B cell (primary cell): ENCODE measurements at regions of chr1 and their contacts with region 1.

Region 1: GRCh38 chr1:25338188-25338981 is at the start of gene TMEM50A:
- DNase-seq: peak; percentile 95
- ATAC-seq: peak; percentile 77
- H3K4me3 ChIP-seq: peak within 1 kb of the TSS; percentile 83 to 89 (median 84)
- H3K4me3 Mint-ChIP-seq: peak within 1 kb of the TSS; percentile 96
- H3K27ac ChIP-seq: peak within 1 kb of the TSS; percentile 86 to 87
- H3K27ac Mint-ChIP-seq: peak within 1 kb of the TSS; percentile 98
- H3K4me1 ChIP-seq: peaks cover 14% of the 10 kb centered on the region in 2 donors
- H3K4me1 Mint-ChIP-seq: peaks cover 30% of the 10 kb centered on the region
- H3K27me3 ChIP-seq: no peaks in the 10 kb centered on the region
- H3K27me3 Mint-ChIP-seq: no peaks in the 10 kb centered on the region
- CTCF ChIP-seq: no peak
- total RNA-seq, gene TMEM50A: 59.4 and 62.6 TPM in 2 replicates

Region 2: DNA sequence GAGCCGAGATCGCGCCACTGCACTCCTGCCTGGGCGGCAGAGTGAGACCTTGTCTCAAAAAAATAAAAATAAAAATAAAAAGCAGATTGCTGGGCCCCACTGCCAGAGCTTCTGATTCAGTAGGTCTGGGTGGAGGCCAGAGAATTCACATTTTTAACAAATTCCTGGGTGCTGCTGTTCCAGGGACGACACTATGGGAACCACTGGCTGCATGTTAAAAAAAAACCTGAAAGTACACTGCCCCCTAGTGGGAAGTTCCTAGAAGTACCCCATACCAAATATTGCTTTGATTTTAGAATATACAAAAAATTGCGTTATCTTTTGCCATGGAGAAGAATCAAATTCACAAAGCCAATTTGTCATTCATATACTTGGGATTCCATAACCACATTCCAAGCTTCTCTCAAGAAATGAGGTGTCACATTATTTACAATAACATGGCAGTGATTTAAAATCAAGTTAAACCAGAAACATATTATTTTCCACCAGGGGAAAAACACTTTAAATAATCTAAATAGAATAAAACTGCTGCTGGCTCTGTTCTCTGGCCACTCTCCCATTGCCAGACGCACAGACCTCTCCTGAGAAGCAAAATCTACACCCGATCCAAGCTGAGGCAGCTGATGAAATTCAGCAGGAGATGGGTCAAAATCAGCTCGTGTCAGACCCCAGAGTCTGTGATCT is 133.4 kb before region 1 on chr1:
- CTCF ChIA-PET with region 1: no interaction called
- POLR2A ChIA-PET with region 1: no interaction called
- intact Hi-C with region 1: no loop called
- DNase-seq: peak; percentile 63
- ATAC-seq: peak; percentile 49
- H3K4me3 ChIP-seq: no peak overlapping the region
- H3K4me3 Mint-ChIP-seq: no peak overlapping the region
- H3K27ac ChIP-seq: no peak overlapping the region
- H3K27ac Mint-ChIP-seq: no peak overlapping the region
- H3K4me1 ChIP-seq: no peaks in the 10 kb centered on the region
- H3K4me1 Mint-ChIP-seq: no peaks in the 10 kb centered on the region
- H3K27me3 ChIP-seq: peaks cover 0 to 7% (median 0%) of the 10 kb centered on the region in 4 experiments
- H3K27me3 Mint-ChIP-seq: peaks cover 12% of the 10 kb centered on the region
- CTCF ChIP-seq: peak; percentile 86

Region 3: DNA sequence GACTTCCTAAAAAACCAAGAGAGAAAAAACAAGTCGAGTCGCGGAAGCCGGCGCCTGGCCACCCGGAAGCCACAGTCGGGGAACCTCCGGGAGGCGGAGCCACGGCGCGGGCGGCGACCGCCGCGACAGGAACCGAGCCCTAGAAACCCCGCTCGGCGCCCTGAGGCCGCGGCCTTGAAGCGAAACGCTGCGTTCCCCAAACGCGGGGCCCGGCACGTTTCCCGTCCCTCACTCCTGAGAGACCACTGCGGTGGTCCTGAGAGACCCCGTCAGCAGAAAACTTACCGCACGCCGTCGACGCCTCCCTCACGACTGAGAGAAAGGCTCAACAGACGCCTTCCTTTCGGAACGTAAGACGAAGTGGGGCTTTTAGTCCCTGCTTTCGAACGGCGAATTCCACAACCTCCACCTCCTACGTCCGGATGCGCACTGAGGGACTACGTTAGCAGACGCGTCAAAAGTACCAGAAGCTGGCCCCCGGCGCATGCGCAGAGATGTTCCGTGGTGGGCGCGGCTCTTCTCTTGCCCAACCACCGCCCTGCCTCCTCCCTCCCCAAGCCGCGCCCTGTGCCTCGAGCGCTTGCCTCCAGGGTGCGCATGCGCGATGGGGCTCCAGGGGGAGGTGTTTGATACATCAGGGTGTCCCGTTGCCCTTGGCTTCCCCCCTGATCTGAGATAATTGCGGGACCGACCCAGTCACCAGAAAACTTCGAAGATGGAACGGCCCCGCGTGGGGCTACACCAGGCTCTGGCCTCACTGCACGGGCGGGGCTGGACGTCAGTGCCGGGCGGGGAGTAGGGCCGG is 91.2 kb before region 1 on chr1 and contains the start of gene RSRP1:
- CTCF ChIA-PET with region 1: no interaction called
- POLR2A ChIA-PET with region 1: interaction called, 3 read pairs
- intact Hi-C with region 1: loop called (anchors 2 kb)
- DNase-seq: peak; percentile 99
- ATAC-seq: peak; percentile 86
- H3K4me3 ChIP-seq: peak within 1 kb of the TSS; percentile 91 to 99 (median 96)
- H3K4me3 Mint-ChIP-seq: peak within 1 kb of the TSS; percentile 99
- H3K27ac ChIP-seq: peak within 1 kb of the TSS; percentile 97 to 99
- H3K27ac Mint-ChIP-seq: peak within 1 kb of the TSS; percentile 100
- H3K4me1 ChIP-seq: peaks cover 25 to 26% of the 10 kb centered on the region in 2 donors
- H3K4me1 Mint-ChIP-seq: peaks cover 44% of the 10 kb centered on the region
- H3K27me3 ChIP-seq: no peaks in the 10 kb centered on the region
- H3K27me3 Mint-ChIP-seq: no peaks in the 10 kb centered on the region
- CTCF ChIP-seq: no peak
- total RNA-seq, gene RSRP1: 474 and 482 TPM in 2 replicates